GM13977 (cell line): ENCODE measurements at regions of chr12 and their contacts with region 1.

Region 1: GRCh38 chr12:2057041-2057794 is 4.4 kb downstream of the CACNA1C start:
- DNase-seq: peak; percentile 51
- CTCF ChIP-seq: peak; percentile 70

Region 2: DNA sequence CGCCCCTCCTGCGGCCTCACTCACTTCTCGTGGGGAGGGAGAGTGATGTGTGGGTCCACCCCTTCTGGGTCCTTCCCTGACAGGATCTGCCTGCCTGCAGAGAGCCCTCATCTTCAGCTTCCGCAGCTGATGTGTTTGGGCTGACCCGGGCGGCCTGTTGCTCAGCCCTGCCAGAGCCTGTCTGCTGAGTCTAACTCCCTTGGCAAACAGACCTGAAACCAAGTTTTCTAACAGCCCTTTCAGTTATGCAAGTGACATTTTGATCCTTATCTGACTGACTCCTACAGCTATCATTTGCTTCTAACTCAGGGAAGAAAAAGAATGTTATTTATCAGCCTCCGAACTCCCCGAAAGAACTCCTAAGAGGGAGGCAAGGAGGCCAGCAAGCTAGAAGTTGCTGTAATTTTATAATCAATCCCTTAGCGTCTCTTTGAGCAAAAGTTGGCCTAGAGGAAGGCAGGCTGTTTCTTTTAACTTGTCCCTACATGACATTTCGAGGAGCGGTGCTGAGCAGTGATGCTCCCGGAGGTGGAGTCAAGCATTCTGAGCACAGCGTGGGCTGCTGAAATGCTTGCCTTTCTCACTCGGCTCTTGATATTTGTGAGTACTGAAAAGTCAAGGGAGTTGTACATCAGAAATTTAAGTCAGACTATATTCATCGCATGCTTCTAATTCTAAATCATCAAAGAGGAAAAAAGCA is 107.3 kb before region 1 on chr12:
- in situ Hi-C with region 1: no loop called
- DNase-seq: no peak
- CTCF ChIP-seq: no peak

Region 3: GRCh38 chr12:2550561-2551411 is 493.6 kb after region 1 on chr12:
- in situ Hi-C with region 1: no loop called
- DNase-seq: no peak
- CTCF ChIP-seq: no peak

Region 4: DNA sequence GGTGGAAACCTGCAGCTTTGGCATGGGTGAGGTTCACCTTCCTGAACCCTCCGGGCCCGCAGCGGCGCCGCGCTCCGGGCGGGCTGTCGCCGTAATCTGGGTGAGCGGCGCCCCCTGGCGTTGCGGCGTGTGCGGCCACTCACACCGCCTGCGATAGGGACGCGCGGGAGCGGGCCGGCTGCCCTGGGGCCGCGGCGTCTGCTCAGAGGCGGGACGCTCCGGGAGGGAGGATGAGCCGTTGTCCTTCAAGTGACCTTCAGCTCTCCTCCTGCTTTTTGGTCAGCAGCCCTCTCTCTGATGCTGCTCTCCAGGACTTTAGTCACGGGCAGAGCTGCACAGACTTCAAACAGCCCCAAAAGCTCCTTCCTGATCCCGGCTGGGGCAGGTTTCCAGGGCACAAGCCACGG is 525.9 kb after region 1 on chr12:
- in situ Hi-C with region 1: loop called (anchors 10 kb)
- DNase-seq: peak; percentile 86
- CTCF ChIP-seq: peak; percentile 96